GM13977 (cell line): ENCODE measurements at regions of chr6 and their contacts with region 1.

Region 1: GRCh38 chr6:36340618-36341454 is 4.1 kb upstream of the BNIP5 start:
- DNase-seq: peak; percentile 78
- CTCF ChIP-seq: peak; percentile 94

Region 2: DNA sequence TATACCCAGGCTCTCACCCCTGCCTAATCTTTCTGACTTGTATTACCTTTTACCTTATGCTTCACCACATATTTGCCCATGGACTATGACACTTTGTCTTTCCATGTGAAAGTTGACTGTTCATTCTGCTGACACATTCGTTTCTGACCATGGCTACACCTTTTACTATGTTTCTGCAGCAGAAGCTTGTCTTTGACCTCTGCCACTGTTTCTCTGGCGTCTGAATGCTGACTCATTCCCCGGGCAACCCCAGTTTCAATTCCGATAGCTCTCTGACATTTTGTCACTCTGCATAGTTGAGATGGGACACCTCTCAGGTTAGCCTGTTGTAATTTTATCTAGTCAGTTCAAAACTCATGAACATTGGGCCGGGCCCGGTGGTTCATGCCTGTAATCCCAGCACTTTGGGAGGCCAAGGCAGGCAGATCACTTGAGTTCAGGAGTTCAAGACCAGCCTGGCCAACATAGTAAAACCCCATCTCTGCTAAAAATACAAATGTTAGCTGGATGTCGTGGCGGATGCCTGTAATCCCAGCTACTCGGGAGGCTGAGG is 367.1 kb before region 1 on chr6:
- in situ Hi-C with region 1: no loop called
- DNase-seq: peak; percentile 66
- CTCF ChIP-seq: no peak

Region 3: DNA sequence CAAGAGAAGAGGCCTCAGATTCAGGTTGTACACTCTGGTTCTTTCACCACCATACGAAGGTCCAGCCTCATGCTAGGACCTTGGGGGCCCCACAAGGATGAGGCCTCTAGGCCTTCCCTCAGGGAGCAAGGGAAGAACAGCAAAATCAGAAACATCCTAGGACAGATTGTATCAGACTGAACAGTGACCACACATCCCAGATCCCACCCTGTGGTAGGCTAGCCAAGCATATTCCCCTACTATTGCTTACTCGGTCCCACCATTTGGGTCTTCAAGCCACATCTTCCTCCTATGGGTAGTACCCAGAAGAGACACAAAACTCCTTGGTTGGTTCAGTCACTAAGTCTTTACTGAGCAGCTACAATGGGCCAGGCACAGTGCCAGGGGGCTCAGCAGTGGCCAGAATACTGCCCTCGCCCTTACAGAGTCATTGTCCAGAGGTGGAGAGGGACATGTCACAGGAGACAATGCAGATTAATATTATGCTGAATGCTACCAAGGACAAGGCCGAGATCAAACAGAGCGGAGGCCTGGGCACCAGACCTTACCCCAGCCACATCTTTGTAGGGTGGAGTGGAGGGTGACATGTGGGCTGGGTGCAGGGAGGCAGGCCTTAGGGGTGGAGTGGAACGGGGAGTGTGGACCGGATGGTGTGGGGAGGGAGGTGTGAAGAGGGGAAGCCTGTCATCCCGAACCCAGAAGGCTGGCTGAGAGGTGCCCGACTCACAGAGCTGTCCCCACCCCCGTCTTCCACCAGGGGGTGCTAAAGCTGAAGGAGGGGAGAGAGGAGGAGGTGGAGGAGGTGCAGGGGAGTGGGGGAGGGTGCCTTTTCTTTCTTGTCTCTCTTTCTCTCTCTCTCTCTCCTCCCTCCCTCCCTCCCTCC is 217.3 kb before region 1 on chr6:
- in situ Hi-C with region 1: loop called (anchors 10 kb)
- DNase-seq: peak; percentile 79
- CTCF ChIP-seq: peak; percentile 93